Endothelial cell of umbilical vein (primary cell): ENCODE measurements at regions of chr9 and their contacts with region 1.

Region 1: GRCh38 chr9:21434202-21435014 is 5.8 kb upstream of the IFNA1 start:
- DNase-seq: peak; percentile 68
- H3K4me3 ChIP-seq: no peak overlapping the region
- H3K27ac ChIP-seq: no peak overlapping the region
- H3K4me1 ChIP-seq: no peaks in the 10 kb centered on the region
- H3K27me3 ChIP-seq: peaks cover 22 to 56% of the 10 kb centered on the region in 2 experiments
- CTCF ChIP-seq: peak; percentile 41 to 59
- POLR2A ChIP-seq: no peak

Region 2: GRCh38 chr9:21239911-21240310 is 194.5 kb before region 1 on chr9 and contains the start of gene IFNA14:
- CTCF ChIA-PET with region 1: interaction called, 25 read pairs
- POLR2A ChIA-PET with region 1: no interaction called
- dilution Hi-C with region 1: no loop called
- intact Hi-C with region 1: no loop called
- DNase-seq: no peak
- H3K4me3 ChIP-seq: no peak within 1 kb of the TSS
- H3K27ac ChIP-seq: no peak within 1 kb of the TSS
- H3K4me1 ChIP-seq: no peaks in the 10 kb centered on the region
- H3K27me3 ChIP-seq: peaks cover 11 to 28% of the 10 kb centered on the region in 2 experiments
- CTCF ChIP-seq: no peak
- POLR2A ChIP-seq: no peak
- total RNA-seq, gene IFNA14: not detected in 2 replicates

Region 3: GRCh38 chr9:21326526-21327139 is 107.8 kb before region 1 on chr9:
- CTCF ChIA-PET with region 1: interaction called, 33 read pairs
- POLR2A ChIA-PET with region 1: no interaction called
- dilution Hi-C with region 1: no loop called
- intact Hi-C with region 1: no loop called
- DNase-seq: peak; percentile 54
- H3K4me3 ChIP-seq: no peak overlapping the region
- H3K27ac ChIP-seq: no peak overlapping the region
- H3K4me1 ChIP-seq: peaks cover 15% of the 10 kb centered on the region
- H3K27me3 ChIP-seq: no peaks in the 10 kb centered on the region
- CTCF ChIP-seq: peak; percentile 33 to 46
- POLR2A ChIP-seq: no peak

Region 4: GRCh38 chr9:21455320-21455719 is 20.9 kb after region 1 on chr9:
- CTCF ChIA-PET with region 1: interaction called, 28 read pairs
- POLR2A ChIA-PET with region 1: no interaction called
- dilution Hi-C with region 1: no loop called
- intact Hi-C with region 1: no loop called
- DNase-seq: peak; percentile 24
- H3K4me3 ChIP-seq: no peak overlapping the region
- H3K27ac ChIP-seq: no peak overlapping the region
- H3K4me1 ChIP-seq: peaks cover 8% of the 10 kb centered on the region
- H3K27me3 ChIP-seq: no peaks in the 10 kb centered on the region
- CTCF ChIP-seq: peak; percentile 47 to 69
- POLR2A ChIP-seq: no peak

Region 5: DNA sequence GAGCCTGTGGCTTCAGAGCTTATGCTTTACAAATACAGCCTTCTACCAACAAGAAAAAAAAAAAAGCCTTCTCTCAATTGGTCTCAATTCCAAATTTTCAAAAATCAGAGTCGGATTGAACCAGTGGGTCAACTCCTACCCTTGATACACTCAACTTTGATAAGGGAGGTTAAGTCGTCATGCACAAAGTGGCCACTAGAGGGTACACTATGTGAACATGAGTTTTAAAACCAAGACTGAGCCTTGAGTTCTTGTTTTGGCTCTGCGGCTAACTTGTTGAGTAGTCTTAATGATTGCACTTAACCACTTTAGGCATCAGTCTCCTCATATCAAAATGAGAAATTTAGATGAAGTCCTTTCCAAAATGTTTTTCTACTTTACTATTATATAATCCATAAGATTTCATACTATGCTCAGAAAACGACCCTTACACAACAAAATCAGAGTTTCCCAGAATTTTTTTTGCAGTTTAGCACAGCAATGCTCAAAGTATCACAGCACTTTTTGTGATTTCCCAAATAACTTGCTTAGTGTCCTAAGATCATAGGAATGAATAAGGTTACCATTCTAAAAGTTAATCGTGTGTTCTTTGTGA is 275.2 kb after region 1 on chr9:
- CTCF ChIA-PET with region 1: interaction called, 12 read pairs
- POLR2A ChIA-PET with region 1: no interaction called
- dilution Hi-C with region 1: no loop called
- intact Hi-C with region 1: no loop called
- DNase-seq: peak; percentile 69
- H3K4me3 ChIP-seq: no peak overlapping the region
- H3K27ac ChIP-seq: no peak overlapping the region
- H3K4me1 ChIP-seq: no peaks in the 10 kb centered on the region
- H3K27me3 ChIP-seq: no peaks in the 10 kb centered on the region
- CTCF ChIP-seq: peak; percentile 67 to 74
- POLR2A ChIP-seq: no peak

Region 6: GRCh38 chr9:21720758-21721157 is 286.4 kb after region 1 on chr9:
- CTCF ChIA-PET with region 1: no interaction called
- POLR2A ChIA-PET with region 1: no interaction called
- dilution Hi-C with region 1: no loop called
- intact Hi-C with region 1: no loop called
- DNase-seq: no peak
- H3K4me3 ChIP-seq: no peak overlapping the region
- H3K27ac ChIP-seq: no peak overlapping the region
- H3K4me1 ChIP-seq: no peaks in the 10 kb centered on the region
- H3K27me3 ChIP-seq: peaks cover 0 to 12% of the 10 kb centered on the region in 2 experiments
- CTCF ChIP-seq: no peak
- POLR2A ChIP-seq: no peak

Region 7: DNA sequence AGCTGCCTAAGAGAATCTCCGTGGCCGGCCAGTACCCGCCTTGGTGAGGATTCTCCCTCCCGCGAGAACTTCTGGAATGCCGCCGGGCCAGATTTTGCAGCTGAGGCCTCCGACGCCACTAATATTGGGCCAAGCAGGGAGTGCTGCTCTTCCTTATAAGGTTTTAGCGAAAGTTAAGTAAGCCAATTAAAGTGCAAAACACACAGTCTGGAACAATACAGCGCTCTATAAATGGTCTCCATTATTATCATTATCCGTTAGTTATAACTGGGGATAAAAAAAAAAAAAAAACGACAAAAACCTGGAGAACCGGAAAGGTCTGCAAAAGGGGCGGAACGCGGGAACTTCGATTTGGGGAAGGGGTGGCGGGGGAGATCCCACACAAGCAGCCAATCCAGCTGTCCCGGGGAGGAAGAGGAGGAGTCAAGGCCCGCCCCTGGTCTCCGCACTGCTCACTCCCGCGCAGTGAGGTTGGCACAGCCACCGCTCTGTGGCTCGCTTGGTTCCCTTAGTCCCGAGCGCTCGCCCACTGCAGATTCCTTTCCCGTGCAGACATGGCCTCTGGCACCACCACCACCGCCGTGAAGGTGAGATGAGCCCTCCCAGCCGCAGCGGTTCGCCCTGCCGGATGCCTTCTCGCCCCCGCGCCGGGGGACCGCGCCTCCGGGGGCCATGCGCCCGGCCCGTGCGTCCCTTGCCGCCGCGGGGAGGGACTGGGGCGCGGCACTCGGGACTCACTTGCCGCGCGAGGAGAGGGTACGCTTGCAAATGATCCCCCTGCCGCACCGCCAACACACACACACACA is 368.0 kb after region 1 on chr9 and contains the start of gene MTAP:
- CTCF ChIA-PET with region 1: interaction called, 14 read pairs
- POLR2A ChIA-PET with region 1: no interaction called
- dilution Hi-C with region 1: no loop called
- intact Hi-C with region 1: no loop called
- DNase-seq: peak; percentile 94
- H3K4me3 ChIP-seq: peak within 1 kb of the TSS; percentile 50 to 86 (median 75)
- H3K27ac ChIP-seq: peak within 1 kb of the TSS; percentile 75
- H3K4me1 ChIP-seq: peaks cover 22% of the 10 kb centered on the region
- H3K27me3 ChIP-seq: peaks cover 5 to 10% of the 10 kb centered on the region in 2 experiments
- CTCF ChIP-seq: no peak
- POLR2A ChIP-seq: peak; percentile 88
- total RNA-seq, gene MTAP: 51.2 and 55.1 TPM in 2 replicates